Dorsolateral prefrontal cortex (tissue), 120 donors: ENCODE measurements at regions of chr6 and their contacts with region 1.

Region 1: DNA sequence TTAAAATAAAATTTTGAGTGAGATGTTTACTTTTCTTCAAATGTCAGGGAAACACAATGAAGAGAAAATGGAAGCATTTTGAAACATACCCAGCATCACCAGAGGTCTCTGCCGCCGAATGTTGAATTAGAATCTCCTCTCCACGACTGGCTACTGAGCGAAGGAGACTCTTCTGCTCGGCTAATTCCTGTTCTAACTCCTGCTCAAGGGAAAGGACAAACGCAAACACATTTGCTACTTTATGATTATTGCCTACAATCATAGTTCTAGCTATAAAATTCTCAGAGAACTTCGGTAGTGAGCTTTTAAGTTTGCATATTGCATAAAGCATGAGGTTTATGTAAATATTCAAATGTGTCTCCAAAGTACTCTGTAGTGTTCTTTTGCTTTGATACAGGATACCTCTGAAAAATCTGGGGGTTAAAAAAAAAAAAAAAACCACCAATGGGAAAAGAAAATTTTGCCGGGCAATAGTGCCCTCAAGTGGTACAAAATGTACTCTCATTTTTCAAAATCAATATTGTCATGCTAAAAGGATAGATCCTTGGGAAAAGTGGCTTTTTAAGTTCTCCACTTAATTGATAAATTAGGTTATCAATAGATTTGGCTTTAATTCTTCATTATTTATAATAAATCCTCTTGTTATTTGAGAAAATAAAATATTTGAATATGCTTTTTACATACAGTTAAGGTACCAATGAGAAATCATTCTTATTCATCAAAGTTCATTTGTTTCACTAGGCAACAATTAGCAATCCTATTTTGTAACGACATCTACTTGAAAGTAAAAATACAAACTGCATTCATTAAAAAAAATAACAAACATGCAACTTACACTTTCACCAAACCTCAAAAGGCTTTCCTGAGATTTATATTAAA is 369.0 kb downstream of the SYNE1 start:
- DNase-seq: no peak
- H3K4me3 ChIP-seq: peak overlapping the region in 2 of 59 donors; percentile 9 to 20
- H3K27ac ChIP-seq: peak overlapping the region in 17 of 59 donors; percentile 1 to 59 (median 31)
- H3K27me3 ChIP-seq: no peaks in the 10 kb centered on the region
- CTCF ChIP-seq: peak; percentile 48 to 95 (median 72)

Region 2: DNA sequence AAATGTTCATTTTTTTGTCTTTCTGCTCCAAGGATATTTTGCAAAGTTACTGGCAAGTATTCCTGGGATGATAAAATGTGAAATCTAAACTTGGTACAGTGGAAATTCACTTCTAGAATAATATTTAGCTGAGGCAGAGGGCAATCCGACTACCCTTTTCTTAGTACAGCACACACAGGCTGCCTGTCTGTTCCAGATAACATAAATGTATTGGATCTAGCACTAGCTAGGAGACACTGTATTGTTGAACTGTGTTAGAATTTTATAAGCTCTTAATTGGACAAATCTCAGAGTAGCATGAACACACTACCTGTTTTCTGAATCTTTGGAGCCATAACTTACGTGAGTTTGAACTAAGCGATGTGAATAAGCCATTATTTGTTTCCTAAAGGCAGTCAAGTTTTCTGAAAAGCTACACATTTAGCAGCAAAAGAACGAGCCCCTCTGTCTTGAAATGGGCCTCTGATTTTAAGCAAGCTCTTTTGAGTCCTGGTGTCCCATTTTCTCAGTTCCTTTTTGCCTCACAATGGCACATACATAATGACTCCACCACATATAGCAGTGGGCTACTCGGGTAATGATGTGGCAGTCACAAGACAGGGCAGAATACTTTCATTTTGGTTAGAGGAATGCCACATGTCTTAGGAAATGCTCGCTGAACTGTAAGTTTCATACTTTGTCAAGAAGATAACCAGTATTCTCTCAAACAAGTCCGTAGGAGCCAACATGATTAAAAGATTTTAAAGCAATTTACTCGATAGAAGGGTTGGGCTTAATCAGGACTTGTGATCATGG is 577.2 kb before region 1 on chr6:
- intact Hi-C with region 1: loop called in 1 of 2 experiments (anchors 10 kb)
- DNase-seq: no peak
- H3K4me3 ChIP-seq: peak overlapping the region in 52 of 59 donors; percentile 0 to 53 (median 30)
- H3K27ac ChIP-seq: peak overlapping the region in 25 of 59 donors; percentile 1 to 71 (median 31)
- H3K27me3 ChIP-seq: no peaks in the 10 kb centered on the region
- CTCF ChIP-seq: no peak

Region 3: GRCh38 chr6:151765444-151765886 is 502.7 kb before region 1 on chr6:
- intact Hi-C with region 1: loop called in 1 of 2 experiments (anchors 2 kb)
- DNase-seq: peak in 2 of 10 donors; percentile 19 to 20
- H3K4me3 ChIP-seq: no peak overlapping the region
- H3K27ac ChIP-seq: no peak overlapping the region
- H3K27me3 ChIP-seq: peaks cover 0 to 7% (median 0%) of the 10 kb centered on the region in 45 donors
- CTCF ChIP-seq: peak; percentile 47 to 90 (median 76)

Region 4: GRCh38 chr6:152124429-152125074 is 143.7 kb before region 1 on chr6:
- intact Hi-C with region 1: loop called in 1 of 2 experiments (anchors 10 kb)
- DNase-seq: no peak
- H3K4me3 ChIP-seq: no peak overlapping the region
- H3K27ac ChIP-seq: peak overlapping the region in 1 of 59 donors; percentile 5
- H3K27me3 ChIP-seq: no peaks in the 10 kb centered on the region
- CTCF ChIP-seq: peak; percentile 56 to 86 (median 76)

Region 5: DNA sequence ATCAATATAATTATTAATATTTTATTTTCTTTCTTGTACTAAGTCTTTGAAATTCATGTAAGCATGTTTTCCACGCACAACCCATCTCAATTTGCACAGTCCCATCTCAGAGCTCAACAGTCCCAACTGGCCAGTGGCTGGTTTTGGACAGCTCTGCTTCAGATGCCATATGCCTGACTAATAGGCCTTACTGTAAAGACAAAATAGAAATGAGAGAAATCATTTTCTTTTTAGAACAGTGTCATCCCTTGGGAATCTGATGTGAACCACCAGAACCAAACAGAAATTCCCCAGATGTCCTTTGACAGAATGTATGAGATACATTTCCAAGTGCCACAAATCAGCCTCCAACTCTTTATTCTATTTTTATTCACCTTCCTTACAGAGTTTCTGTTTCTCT is 121.8 kb before region 1 on chr6:
- intact Hi-C with region 1: no loop called
- DNase-seq: no peak
- H3K4me3 ChIP-seq: no peak overlapping the region
- H3K27ac ChIP-seq: peak overlapping the region in 11 of 59 donors; percentile 2 to 53 (median 17)
- H3K27me3 ChIP-seq: no peaks in the 10 kb centered on the region
- CTCF ChIP-seq: no peak

Region 6: GRCh38 chr6:152204591-152204990 is 63.6 kb before region 1 on chr6:
- intact Hi-C with region 1: loop called in 1 of 2 experiments (anchors 2 kb)
- DNase-seq: no peak
- H3K4me3 ChIP-seq: no peak overlapping the region
- H3K27ac ChIP-seq: no peak overlapping the region
- H3K27me3 ChIP-seq: no peaks in the 10 kb centered on the region
- CTCF ChIP-seq: no peak

Region 7: DNA sequence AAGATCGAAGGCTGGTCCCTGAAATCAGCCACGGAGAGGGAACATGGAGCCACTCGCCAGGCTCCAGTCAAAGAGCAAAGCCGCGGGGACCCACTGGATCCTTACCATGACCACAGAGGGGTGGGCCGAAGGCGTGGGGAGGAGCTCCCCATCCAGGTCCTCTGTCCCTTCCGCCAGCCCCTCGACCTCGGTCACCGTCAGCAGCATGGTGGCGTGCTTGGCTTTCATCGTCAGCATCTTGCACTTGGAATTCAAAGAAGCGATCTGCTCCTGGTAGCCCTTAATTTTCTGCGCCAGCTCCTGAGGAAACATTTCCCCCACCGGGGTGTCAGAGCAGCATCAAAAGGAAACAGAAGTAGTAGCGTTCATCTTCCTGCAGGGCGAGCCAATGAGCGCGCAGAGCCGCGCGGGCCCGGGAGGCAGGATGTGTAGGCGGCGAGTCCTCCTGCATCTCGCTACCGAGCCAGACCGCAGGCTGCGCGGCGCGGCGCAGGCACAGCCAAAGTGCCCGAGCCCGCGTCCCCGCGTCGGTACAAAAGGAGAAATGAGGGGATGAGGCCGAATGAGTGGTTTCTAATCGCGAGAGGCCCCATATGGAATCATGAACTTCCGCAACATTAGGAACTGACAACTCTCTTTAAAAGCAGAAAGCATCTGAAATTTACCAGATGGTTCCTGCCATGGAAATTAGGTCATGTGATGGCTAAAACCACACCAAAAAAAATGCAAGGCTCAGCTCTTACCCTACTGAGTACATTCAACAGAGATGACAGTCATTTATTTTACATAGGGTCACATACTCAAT is 33.8 kb after region 1 on chr6:
- intact Hi-C with region 1: loop called in 1 of 2 experiments (anchors 2 kb)
- DNase-seq: peak; percentile 84 to 94 (median 92)
- H3K4me3 ChIP-seq: peak overlapping the region; percentile 57 to 90 (median 76)
- H3K27ac ChIP-seq: peak overlapping the region; percentile 69 to 98 (median 93)
- H3K27me3 ChIP-seq: no peaks in the 10 kb centered on the region
- CTCF ChIP-seq: peak; percentile 18 to 75 (median 60)

Region 8: GRCh38 chr6:152529369-152529768 is 261.2 kb after region 1 on chr6:
- intact Hi-C with region 1: no loop called
- DNase-seq: no peak
- H3K4me3 ChIP-seq: no peak overlapping the region
- H3K27ac ChIP-seq: no peak overlapping the region
- H3K27me3 ChIP-seq: no peaks in the 10 kb centered on the region
- CTCF ChIP-seq: no peak